Gastrocnemius medialis (tissue), 4 donors: ENCODE measurements at regions of chr2 and their contacts with region 1.

Region 1: GRCh38 chr2:37414470-37414949 is 70.1 kb downstream of the QPCT start:
- DNase-seq: no peak
- ATAC-seq: peak; percentile 86 to 94
- H3K4me3 ChIP-seq: no peak overlapping the region
- H3K27ac ChIP-seq: no peak overlapping the region
- H3K4me1 ChIP-seq: peaks cover 5 to 12% of the 10 kb centered on the region in 2 donors
- H3K27me3 ChIP-seq: no peaks in the 10 kb centered on the region
- CTCF ChIP-seq: peak; percentile 78 to 98 (median 85)
- POLR2A ChIP-seq: no peak

Region 2: DNA sequence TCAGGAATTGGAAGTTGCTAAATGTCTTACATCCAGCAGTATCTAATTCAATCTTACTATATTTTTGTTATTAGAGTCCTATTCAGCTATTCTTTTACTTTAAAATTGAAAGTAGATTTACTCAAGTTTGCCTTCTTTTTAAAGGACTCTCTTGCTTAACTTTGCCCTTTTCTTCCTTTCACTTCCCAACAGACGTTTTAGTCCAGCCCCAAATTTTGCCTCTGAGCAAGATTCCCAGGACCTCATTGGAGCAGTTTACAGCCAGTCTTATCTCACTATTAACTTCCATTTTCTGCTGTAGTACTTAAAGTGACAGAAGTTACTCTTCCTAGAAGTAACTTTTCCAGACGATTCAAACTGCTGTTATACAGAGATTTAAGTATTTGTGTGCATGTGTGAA is 88.2 kb before region 1 on chr2:
- in situ Hi-C with region 1: no loop called
- intact Hi-C with region 1: no loop called
- DNase-seq: peak; percentile 27 to 29
- ATAC-seq: peak in 1 of 2 donors; percentile 29
- H3K4me3 ChIP-seq: peak overlapping the region; percentile 71 to 88 (median 80)
- H3K27ac ChIP-seq: peak overlapping the region; percentile 79 to 93 (median 90)
- H3K4me1 ChIP-seq: peaks cover 17 to 27% of the 10 kb centered on the region in 2 donors
- H3K27me3 ChIP-seq: no peaks in the 10 kb centered on the region
- CTCF ChIP-seq: no peak
- POLR2A ChIP-seq: peak in 1 of 2 donors; percentile 13

Region 3: GRCh38 chr2:37441055-37441454 is 26.5 kb after region 1 on chr2:
- in situ Hi-C with region 1: no loop called
- intact Hi-C with region 1: no loop called
- DNase-seq: no peak
- ATAC-seq: no peak
- H3K4me3 ChIP-seq: no peak overlapping the region
- H3K27ac ChIP-seq: no peak overlapping the region
- H3K4me1 ChIP-seq: no peaks in the 10 kb centered on the region
- H3K27me3 ChIP-seq: no peaks in the 10 kb centered on the region
- CTCF ChIP-seq: no peak
- POLR2A ChIP-seq: no peak

Region 4: GRCh38 chr2:37529830-37530415 is 115.4 kb after region 1 on chr2:
- in situ Hi-C with region 1: loop called in 1 of 4 experiments (anchors 10 kb)
- intact Hi-C with region 1: no loop called
- DNase-seq: no peak
- ATAC-seq: no peak
- H3K4me3 ChIP-seq: no peak overlapping the region
- H3K27ac ChIP-seq: no peak overlapping the region
- H3K4me1 ChIP-seq: no peaks in the 10 kb centered on the region
- H3K27me3 ChIP-seq: no peaks in the 10 kb centered on the region
- CTCF ChIP-seq: no peak
- POLR2A ChIP-seq: no peak

Region 5: GRCh38 chr2:37625796-37626571 is 211.5 kb after region 1 on chr2:
- in situ Hi-C with region 1: no loop called
- intact Hi-C with region 1: loop called (anchors 5 kb)
- DNase-seq: no peak
- ATAC-seq: peak; percentile 22 to 37
- H3K4me3 ChIP-seq: no peak overlapping the region
- H3K27ac ChIP-seq: peak overlapping the region in 3 of 4 donors; percentile 3 to 61 (median 56)
- H3K4me1 ChIP-seq: peaks cover 9 to 19% of the 10 kb centered on the region in 2 donors
- H3K27me3 ChIP-seq: no peaks in the 10 kb centered on the region
- CTCF ChIP-seq: no peak
- POLR2A ChIP-seq: no peak

Region 6: DNA sequence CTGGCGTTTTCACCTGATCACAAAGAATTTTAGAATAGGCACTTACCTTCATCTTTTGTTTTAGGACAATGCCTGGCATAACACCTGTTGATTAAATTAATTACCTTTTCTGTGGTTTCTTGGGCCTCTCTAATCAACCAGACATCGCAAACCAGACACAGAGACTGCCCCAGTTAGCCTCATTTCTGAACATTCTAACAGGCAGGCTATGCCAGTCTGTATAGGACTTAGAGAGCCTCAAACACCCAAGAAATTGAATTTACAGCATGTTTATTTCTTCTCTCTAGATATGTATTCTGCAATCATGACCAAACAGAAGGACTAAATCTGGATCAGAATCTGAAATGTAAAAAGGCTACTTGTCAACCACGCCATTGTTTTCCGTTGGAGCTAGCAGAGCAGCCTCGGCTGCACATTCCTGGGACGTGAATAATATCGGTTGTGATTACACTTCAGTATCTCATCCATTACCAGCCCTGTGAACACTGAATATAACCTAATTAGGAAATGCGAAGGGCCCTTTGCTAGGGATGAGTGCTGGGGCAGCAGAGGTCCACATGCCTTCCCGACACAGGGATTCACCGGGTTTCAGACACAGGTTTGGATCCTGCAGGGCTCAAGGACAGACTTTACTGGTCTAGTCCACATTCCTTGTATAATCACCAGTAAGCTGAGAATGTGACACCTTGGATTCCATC is 274.4 kb after region 1 on chr2:
- in situ Hi-C with region 1: loop called in 1 of 4 experiments (anchors 25 kb)
- intact Hi-C with region 1: no loop called
- DNase-seq: no peak
- ATAC-seq: peak in 1 of 2 donors; percentile 80
- H3K4me3 ChIP-seq: no peak overlapping the region
- H3K27ac ChIP-seq: no peak overlapping the region
- H3K4me1 ChIP-seq: peaks cover 0 to 10% of the 10 kb centered on the region in 2 donors
- H3K27me3 ChIP-seq: no peaks in the 10 kb centered on the region
- CTCF ChIP-seq: no peak
- POLR2A ChIP-seq: no peak

Region 7: GRCh38 chr2:37837628-37838328 is 423.3 kb after region 1 on chr2:
- in situ Hi-C with region 1: loop called in 3 of 4 experiments (anchors 5 kb)
- intact Hi-C with region 1: loop called (anchors 1 kb)
- DNase-seq: no peak
- ATAC-seq: peak in 1 of 2 donors; percentile 21
- H3K4me3 ChIP-seq: no peak overlapping the region
- H3K27ac ChIP-seq: no peak overlapping the region
- H3K4me1 ChIP-seq: no peaks in the 10 kb centered on the region
- H3K27me3 ChIP-seq: no peaks in the 10 kb centered on the region
- CTCF ChIP-seq: no peak
- POLR2A ChIP-seq: no peak